Activated T-helper 1 cell treated with anti-CD3 and anti-CD28 coated beads, Interleukin-12 subunit alpha, Interleukin-12 subunit beta, Interleukin-2, Interleukin-4 antibody, amounts not matched to agents 30 ng/mL and 10 ng/mL and 1 ng/mL, durations not matched to agents 14 hours and 24 hours and 36 hours (primary cell): ENCODE measurements at regions of chr20 and their contacts with region 1.

Region 1: DNA sequence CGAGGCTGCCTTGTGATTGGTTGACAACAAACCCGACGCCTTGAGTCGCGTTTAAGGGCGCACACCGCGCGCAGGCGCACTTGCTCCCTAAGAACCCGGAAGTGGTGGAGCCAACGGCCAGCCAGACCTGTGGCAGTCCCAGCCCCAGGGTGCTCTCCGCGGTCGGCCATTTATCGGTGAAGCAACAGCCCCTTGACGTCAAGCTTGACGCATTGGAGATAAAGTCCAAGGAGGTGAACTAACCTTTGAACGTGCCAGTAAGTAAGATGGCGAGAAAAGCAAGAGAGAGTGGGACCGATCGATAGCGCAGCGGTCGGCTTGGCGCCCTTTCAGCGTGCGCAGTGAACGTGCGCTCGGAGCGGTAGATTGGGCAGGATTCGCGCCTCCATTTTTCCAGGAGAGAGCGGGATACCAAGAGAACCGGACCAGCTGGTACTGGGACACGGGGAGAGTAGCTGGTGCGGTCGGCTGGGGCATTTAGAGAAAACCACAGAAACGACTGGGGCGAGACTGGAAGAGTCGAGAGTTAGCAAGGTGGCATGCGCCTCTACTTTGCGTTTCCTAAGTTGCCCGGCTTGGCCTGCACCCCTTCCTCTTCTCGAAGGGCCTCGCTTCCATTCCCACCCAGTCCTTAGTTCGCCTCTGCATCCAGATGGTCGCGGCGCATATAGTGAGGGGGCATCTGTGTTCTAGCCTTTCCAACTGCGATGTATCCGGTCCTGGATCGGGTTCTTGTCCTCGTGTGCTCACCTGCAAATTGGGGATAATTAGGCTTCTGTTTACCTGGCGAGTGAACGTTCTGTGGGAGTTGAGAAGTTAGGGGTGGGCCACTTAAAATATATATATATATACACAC is at the start of gene CSTF1:
- DNase-seq: peak; percentile 99
- H3K4me3 Mint-ChIP-seq: no peak within 1 kb of the TSS
- H3K27ac Mint-ChIP-seq: no peak within 1 kb of the TSS
- H3K4me1 Mint-ChIP-seq: peaks cover 49% of the 10 kb centered on the region
- H3K27me3 Mint-ChIP-seq: no peaks in the 10 kb centered on the region
- total RNA-seq, gene CSTF1: 55.2 and 60.9 TPM in 2 replicates

Region 2: DNA sequence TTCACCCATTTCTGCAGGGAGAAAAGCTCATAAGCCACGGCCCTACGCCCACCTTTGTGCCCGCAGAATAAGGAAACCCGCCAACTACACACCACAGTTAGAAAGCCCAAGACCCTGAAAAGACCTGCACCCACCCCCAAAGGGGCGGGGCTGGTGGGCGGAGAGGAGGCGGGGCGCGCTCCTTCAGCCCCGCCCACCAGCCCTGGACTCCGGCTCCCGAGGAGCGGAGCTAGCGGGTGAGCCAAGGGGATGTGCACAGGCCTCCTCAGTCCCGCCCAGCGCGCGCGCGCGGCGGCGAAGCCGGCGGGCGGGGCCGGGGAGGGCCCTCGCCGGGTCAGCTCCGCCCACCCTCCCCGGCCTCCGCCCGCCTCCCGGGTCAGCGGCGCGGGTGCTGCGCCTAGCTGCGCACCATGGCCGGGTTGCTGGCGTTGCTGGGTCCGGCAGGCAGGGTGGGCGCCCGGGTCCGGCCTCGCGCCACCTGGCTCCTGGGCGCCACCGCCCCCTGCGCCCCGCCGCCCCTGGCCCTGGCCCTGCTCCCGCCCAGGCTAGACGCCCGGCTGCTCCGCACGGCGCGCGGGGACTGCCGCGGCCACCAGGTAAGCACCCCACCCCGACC is 33.8 kb before region 1 on chr20 and contains the start of gene FAM210B:
- intact Hi-C with region 1: loop called (anchors 1 kb)
- DNase-seq: peak; percentile 76
- H3K4me3 Mint-ChIP-seq: peak within 1 kb of the TSS; percentile 85
- H3K27ac Mint-ChIP-seq: peak within 1 kb of the TSS; percentile 48
- H3K4me1 Mint-ChIP-seq: peaks cover 7% of the 10 kb centered on the region
- H3K27me3 Mint-ChIP-seq: peaks cover 7% of the 10 kb centered on the region
- total RNA-seq, gene FAM210B: 6.2 and 6.9 TPM in 2 replicates

Region 3: DNA sequence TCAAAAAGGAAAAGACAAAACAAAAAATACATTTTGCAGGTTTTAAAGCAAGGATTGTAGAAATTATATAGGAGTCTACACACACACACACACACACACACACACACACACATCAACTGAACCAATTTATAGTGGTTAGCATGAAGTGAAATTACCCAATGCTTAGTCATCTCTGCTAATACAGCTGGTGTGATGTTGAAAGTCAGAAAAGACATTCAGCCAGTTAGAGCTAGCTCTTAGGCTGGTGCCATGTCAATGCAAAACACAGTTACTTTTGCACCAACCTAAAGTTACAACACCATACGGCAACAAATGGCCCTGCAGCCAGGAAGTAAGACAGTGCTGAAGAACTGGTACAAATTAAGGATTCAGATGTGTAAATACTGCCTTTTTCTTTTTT is 18.6 kb before region 1 on chr20:
- intact Hi-C with region 1: loop called (anchors 2 kb)
- DNase-seq: no peak
- H3K4me3 Mint-ChIP-seq: no peak overlapping the region
- H3K27ac Mint-ChIP-seq: no peak overlapping the region
- H3K4me1 Mint-ChIP-seq: peaks cover 45% of the 10 kb centered on the region
- H3K27me3 Mint-ChIP-seq: no peaks in the 10 kb centered on the region

Region 4: DNA sequence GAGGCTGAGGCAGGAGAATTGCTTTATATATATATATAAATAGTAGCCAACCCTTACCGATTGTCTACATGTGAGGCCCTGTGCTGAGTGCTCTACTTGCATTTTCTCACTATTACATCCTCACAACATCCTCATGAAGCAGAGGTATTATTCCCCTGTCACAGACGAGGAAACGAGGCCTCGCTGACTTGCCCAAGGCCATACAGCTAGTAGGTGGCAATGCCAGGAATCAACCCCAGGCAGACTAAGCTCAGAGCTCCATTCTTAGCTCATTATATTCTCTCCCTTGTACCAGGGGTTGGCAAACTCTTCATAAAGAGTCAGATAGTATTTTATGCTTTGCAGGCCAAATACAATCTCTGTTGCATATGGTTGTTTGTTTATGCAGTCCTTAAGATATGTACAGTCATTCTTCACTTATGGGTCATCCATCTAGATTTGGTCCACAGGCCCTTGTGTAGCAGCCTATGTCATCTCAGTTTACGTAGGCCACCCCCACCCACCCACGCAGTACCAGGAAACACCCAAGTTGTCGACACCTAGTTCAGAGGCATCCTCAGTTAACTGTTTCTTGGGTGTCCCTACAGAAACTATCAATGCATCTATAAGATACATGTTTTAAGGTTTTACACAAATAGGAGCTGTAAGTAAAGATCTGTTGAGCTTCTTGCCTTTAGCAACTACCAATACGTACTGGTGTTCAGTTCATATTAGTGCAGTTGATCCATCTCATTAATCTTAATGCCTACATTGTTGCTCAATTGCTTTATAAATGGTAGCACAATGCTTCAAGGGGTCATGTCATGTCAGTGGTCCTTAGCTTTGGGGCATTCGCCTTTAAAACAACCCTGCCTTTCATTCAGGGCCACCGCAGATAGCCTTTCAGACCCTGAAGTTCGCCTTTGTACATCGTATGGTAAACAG is 22.6 kb after region 1 on chr20:
- intact Hi-C with region 1: loop called (anchors 1 kb)
- DNase-seq: no peak
- H3K4me3 Mint-ChIP-seq: peak overlapping the region; percentile 53
- H3K27ac Mint-ChIP-seq: peak overlapping the region; percentile 92
- H3K4me1 Mint-ChIP-seq: peaks cover 69% of the 10 kb centered on the region
- H3K27me3 Mint-ChIP-seq: no peaks in the 10 kb centered on the region

Region 5: GRCh38 chr20:56504373-56505005 is 112.0 kb after region 1 on chr20:
- intact Hi-C with region 1: loop called (anchors 2 kb)
- DNase-seq: no peak
- H3K4me3 Mint-ChIP-seq: no peak overlapping the region
- H3K27ac Mint-ChIP-seq: peak overlapping the region; percentile 63
- H3K4me1 Mint-ChIP-seq: no peaks in the 10 kb centered on the region
- H3K27me3 Mint-ChIP-seq: no peaks in the 10 kb centered on the region